Psoas muscle (tissue), 8 donors: ENCODE measurements at regions of chr9 and their contacts with region 1.

Region 1: GRCh38 chr9:6049798-6050197 is 34.4 kb upstream of the RANBP6 start:
- DNase-seq: no peak
- ATAC-seq: no peak
- H3K4me3 ChIP-seq: no peak overlapping the region
- H3K27ac ChIP-seq: no peak overlapping the region
- H3K4me1 ChIP-seq: no peaks in the 10 kb centered on the region
- H3K27me3 ChIP-seq: peaks cover 0 to 3% (median 2%) of the 10 kb centered on the region in 3 donors
- CTCF ChIP-seq: peak; percentile 23

Region 2: DNA sequence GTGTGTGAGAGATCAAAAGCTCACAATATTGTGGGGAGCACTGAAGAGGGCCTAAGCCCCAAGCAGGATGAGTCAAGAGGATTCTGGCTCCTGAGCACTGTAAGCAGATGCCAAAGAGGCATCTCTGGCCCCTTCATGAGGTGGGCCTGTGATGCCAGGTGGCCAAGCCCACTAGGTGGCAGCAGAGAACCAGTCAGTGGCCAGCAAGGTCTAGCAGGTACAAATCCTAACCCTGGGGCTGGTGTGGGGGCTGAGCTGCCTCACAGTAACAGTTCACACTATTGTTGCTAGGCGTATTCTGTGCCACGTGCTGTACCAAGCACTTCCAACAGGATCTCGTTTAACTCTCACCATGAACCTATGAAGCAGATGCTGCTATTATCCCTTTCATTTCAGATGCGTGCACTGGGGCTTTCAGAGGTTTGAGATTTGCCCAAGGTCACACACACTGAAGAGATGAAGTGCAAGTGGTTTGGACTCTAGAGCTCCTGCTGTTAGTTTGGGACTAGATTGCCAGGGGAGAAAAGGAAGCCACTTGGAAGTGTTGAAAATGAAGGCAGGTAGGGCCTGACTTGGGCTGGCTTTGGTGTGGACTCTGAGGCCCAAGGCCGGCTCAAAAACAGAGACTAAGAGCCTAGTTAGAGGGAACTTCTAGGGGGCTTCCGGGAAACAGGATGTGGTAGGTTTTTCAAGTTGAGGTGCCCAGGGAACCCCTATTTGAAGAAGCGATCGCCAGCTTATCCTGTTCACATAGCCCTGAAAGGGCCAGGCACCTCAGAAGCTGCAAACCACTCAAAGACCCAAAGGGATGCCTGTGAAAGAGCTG is 163.5 kb before region 1 on chr9:
- intact Hi-C with region 1: loop called (anchors 2 kb)
- DNase-seq: peak; percentile 64 to 83
- ATAC-seq: peak; percentile 78 to 96 (median 88)
- H3K4me3 ChIP-seq: no peak overlapping the region
- H3K27ac ChIP-seq: no peak overlapping the region
- H3K4me1 ChIP-seq: no peaks in the 10 kb centered on the region
- H3K27me3 ChIP-seq: no peaks in the 10 kb centered on the region
- CTCF ChIP-seq: peak; percentile 88

Region 3: GRCh38 chr9:6090317-6090716 is 40.5 kb after region 1 on chr9:
- intact Hi-C with region 1: no loop called
- DNase-seq: no peak
- ATAC-seq: peak; percentile 73 to 100 (median 95)
- H3K4me3 ChIP-seq: no peak overlapping the region
- H3K27ac ChIP-seq: no peak overlapping the region
- H3K4me1 ChIP-seq: peaks cover 15% of the 10 kb centered on the region
- H3K27me3 ChIP-seq: no peaks in the 10 kb centered on the region
- CTCF ChIP-seq: no peak